ENCODE measurements at regions of chr9 and their contacts with region 1.

Region 1: DNA sequence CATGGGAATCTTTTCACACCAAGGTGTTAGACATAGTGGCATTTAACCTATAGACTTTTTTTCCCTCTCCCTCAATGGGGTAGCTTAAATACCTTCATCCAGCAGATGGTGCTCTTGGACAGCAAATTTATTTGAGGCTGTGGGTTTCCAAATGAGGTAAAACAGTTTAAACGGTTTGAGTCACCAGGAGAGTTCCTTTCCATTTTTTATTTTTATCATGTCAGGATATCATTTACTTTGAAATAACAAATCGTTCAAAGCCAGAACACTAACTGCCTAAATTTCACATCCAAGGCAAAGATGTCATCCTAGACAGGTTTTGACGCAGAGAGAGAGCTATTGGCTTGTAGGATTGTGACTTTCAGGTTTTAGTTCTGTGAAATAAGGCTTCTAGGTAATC is 69.7 kb downstream of the KDM4C start:
- DNase-seq: peak; percentile 69
- H3K4me3 ChIP-seq: no peak overlapping the region
- H3K27ac ChIP-seq: no peak overlapping the region
- H3K4me1 ChIP-seq: no peaks in the 10 kb centered on the region
- H3K27me3 ChIP-seq: no peaks in the 10 kb centered on the region
- CTCF ChIP-seq: peak; percentile 52
- POLR2A ChIP-seq: no peak

Region 2: DNA sequence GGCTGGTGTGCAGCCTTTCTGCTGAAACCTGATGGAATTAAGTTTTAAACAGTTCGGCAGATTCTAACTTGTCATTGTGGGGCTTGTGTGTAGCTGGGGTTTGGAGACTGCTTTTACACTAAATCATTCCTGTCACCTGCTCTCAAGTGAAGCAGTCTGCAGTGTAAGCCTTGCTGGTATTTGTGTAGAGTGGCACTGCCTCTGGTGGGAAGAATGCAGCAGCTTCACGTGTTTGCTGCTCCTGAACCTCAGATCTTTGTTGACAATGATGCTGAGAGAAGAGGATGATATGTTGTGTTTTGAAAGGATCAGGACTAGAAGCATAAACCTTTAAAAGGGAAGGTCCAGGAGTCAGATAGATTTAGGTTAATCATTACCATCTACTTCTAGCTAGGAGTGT is 18.4 kb after region 1 on chr9:
- CTCF ChIA-PET with region 1: interaction called, 41 read pairs
- POLR2A ChIA-PET with region 1: no interaction called
- dilution Hi-C with region 1: no loop called
- intact Hi-C with region 1: no loop called
- DNase-seq: no peak
- H3K4me3 ChIP-seq: no peak overlapping the region
- H3K27ac ChIP-seq: no peak overlapping the region
- H3K4me1 ChIP-seq: no peaks in the 10 kb centered on the region
- H3K27me3 ChIP-seq: no peaks in the 10 kb centered on the region
- CTCF ChIP-seq: no peak
- POLR2A ChIP-seq: no peak

Region 3: GRCh38 chr9:6902423-6902822 is 75.0 kb after region 1 on chr9:
- CTCF ChIA-PET with region 1: interaction called, 9 read pairs
- POLR2A ChIA-PET with region 1: no interaction called
- dilution Hi-C with region 1: no loop called
- intact Hi-C with region 1: loop called (anchors 2 kb)
- DNase-seq: peak; percentile 30
- H3K4me3 ChIP-seq: no peak overlapping the region
- H3K27ac ChIP-seq: peak overlapping the region; percentile 32
- H3K4me1 ChIP-seq: peaks cover 8% of the 10 kb centered on the region
- H3K27me3 ChIP-seq: no peaks in the 10 kb centered on the region
- CTCF ChIP-seq: no peak
- POLR2A ChIP-seq: no peak

Region 4: DNA sequence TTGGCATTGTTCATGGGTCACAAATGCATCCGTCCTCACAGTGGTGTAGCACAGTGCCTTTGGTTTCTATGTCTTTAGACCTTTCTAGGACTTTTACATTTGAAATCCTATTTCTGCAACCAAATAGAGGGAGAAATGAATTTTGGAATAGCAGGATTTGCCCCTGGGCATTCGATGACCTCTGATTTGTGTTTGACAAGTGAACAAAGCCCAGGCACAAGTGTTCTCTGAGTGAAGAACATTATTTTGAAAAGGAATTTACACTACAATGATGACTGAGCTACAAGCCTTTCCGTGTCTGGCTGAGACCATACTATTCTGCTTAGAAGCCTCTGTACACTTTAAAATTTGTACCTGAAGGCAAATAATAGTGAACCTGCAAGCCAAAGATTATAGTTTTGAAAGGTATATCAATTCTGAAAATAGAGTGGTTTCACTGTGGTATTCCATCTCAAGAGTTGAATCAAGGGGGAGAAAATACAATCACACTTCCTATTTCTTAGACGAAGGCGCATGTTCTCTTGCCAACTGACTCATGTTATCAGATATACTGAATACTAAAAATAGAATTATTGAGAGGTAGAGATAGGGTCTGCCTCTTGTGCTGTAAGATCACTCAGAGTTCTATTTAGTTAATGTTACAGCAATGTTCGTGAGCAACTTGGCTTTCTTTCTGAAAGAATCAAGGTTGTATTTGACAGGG is 227.9 kb after region 1 on chr9:
- CTCF ChIA-PET with region 1: interaction called, 60 read pairs
- POLR2A ChIA-PET with region 1: no interaction called
- dilution Hi-C with region 1: no loop called
- intact Hi-C with region 1: loop called (anchors 1 kb)
- DNase-seq: peak; percentile 34
- H3K4me3 ChIP-seq: no peak overlapping the region
- H3K27ac ChIP-seq: no peak overlapping the region
- H3K4me1 ChIP-seq: no peaks in the 10 kb centered on the region
- H3K27me3 ChIP-seq: no peaks in the 10 kb centered on the region
- CTCF ChIP-seq: no peak
- POLR2A ChIP-seq: no peak

Region 5: GRCh38 chr9:7234143-7234542 is 406.7 kb after region 1 on chr9:
- CTCF ChIA-PET with region 1: interaction called, 25 read pairs
- POLR2A ChIA-PET with region 1: no interaction called
- dilution Hi-C with region 1: no loop called
- intact Hi-C with region 1: no loop called
- DNase-seq: peak; percentile 43
- H3K4me3 ChIP-seq: no peak overlapping the region
- H3K27ac ChIP-seq: no peak overlapping the region
- H3K4me1 ChIP-seq: no peaks in the 10 kb centered on the region
- H3K27me3 ChIP-seq: peaks cover 0 to 2% of the 10 kb centered on the region in 2 experiments
- CTCF ChIP-seq: peak; percentile 57 to 65
- POLR2A ChIP-seq: no peak

Region 6: DNA sequence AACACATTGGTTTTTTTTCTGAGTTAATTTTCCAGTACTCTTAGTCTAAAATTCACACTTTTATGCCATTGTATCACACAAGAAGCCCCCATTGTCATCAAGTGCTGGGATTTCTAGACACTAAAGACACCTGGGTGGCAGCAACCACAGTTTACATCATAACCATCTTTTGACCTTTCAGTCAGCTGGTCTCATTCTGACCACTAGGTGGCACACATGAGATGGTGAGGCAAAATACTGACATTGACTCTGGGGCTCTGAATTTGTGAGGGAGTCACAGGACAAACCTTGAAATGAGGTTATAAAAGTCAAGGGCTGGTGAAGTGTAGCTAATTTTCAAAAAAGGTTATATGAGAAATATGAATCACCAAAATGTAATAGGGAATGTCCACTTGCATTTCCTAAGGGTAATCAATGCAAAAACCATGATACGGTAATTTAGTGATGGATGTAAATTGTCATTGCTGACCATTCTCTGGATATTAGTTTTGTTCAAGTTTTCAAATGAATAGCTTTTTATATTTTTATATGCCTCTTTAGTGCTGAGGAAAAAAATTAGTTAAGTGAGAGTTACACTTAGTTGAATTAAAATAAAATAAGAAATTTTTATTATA is 742.8 kb after region 1 on chr9:
- CTCF ChIA-PET with region 1: interaction called, 9 read pairs
- POLR2A ChIA-PET with region 1: no interaction called
- dilution Hi-C with region 1: no loop called
- intact Hi-C with region 1: loop called (anchors 1 kb)
- DNase-seq: peak; percentile 58
- H3K4me3 ChIP-seq: no peak overlapping the region
- H3K27ac ChIP-seq: no peak overlapping the region
- H3K4me1 ChIP-seq: no peaks in the 10 kb centered on the region
- H3K27me3 ChIP-seq: no peaks in the 10 kb centered on the region
- CTCF ChIP-seq: peak; percentile 79
- POLR2A ChIP-seq: no peak

Measured in endothelial cell of umbilical vein (primary cell).